ENCODE measurements at regions of chr9 and their contacts with region 1.

Region 1: DNA sequence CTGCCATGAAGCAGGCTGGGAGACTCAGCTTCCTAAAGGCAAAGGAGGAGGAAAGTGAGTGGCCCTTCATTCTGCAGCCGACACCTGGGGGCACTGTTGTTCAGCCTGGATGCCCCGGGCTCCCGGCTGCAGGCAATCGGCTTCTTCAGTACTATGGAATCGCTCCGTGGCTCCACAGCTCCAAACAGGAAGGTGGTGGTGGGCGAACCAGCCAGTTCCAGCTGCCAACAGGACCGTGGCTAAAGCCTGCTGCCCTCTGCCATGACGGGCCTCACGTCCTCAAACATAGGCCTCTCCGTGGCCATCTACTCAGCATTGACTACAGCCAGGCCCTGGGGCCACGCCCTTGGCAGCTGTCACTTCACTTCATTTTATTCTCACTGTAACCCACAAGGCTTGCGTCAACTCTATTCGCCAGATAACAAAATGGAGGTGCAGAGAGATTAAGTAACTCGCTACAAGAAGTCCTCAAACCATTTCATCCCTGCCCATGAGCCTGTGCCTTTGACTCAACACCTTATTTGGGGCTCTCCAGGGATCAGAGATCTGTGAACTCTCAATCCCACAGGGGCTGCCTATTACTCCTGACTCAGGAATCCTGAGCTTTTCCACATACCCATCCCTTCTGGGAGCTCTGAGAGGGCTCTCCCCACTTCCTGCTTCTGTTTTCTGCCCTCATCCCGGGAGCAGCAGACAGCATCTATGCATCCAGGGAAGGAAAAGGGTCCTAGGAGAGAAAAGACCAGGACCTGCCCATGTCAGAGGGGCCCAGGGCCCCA is 38.0 kb downstream of the PAX5 start:
- DNase-seq: peak; percentile 50 to 64 (median 58)
- ATAC-seq: peak; percentile 94
- H3K4me3 ChIP-seq: peak overlapping the region; percentile 27; the same call in 1 of the 2 replicates
- H3K27ac ChIP-seq: no peak overlapping the region; the same call in 2 of the 3 replicates
- H3K4me1 ChIP-seq: peaks cover 5 to 11% of the 10 kb centered on the region in 2 experiments; a peak in 3 of 5 replicates
- H3K27me3 ChIP-seq: peaks cover 4 to 35% of the 10 kb centered on the region in 2 experiments; a peak in 4 of 5 replicates
- CTCF ChIP-seq: peak; percentile 79 to 86 (median 80)
- EP300 ChIP-seq: no peak
- POLR2A ChIP-seq: no peak
- RAD21 ChIP-seq: peak; percentile 72 to 91

Region 2: DNA sequence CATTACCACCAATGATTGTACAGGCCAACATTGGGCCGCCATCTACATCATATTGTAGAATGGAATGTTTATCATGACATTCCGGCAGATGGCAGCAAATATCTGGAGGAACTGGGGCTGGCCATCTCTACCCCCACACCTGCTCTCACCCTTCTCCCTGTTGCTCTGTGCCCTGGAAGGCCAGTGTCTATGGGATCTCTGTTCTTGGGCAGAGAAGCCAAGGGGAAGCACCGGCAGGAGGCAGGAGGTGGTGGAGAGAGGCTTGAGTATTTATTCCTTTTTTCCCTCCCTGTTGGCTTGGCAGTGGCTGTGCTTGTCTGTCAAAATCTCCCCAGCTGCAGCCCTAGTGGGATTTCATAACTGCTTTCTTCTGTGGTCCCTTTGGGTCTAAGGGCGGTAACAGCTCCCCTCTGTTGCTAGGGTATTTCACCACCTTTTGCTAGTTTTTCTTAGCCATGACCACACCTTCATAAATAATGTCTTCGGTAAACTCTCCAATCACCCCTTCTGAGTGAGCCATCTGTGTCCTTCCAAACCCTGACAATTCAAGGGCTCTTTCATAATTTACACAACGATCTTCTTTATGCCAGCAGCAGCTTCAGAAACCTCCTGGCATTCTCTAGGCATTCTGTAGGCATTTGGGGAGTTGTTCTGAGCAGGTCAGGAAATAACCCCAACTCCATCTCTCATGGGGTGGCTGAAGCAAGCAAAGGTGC is 197.6 kb before region 1 on chr9:
- CTCF ChIA-PET with region 1: no interaction called
- POLR2A ChIA-PET with region 1: no interaction called
- in situ Hi-C with region 1: no loop called
- intact Hi-C with region 1: loop called (anchors 1 kb)
- DNase-seq: peak; percentile 13 to 33 (median 18)
- ATAC-seq: peak; percentile 73
- H3K4me3 ChIP-seq: no peak overlapping the region
- H3K27ac ChIP-seq: no peak overlapping the region
- H3K4me1 ChIP-seq: no peaks in the 10 kb centered on the region
- H3K27me3 ChIP-seq: peaks cover 5 to 23% of the 10 kb centered on the region in 2 experiments; a peak in 2 of 5 replicates
- CTCF ChIP-seq: peak; percentile 36 to 55 (median 37); a peak in 4 of 6 replicates
- EP300 ChIP-seq: no peak
- POLR2A ChIP-seq: no peak
- RAD21 ChIP-seq: peak in 1 of 2 experiments; percentile 62; a peak in 2 of 4 replicates

Region 3: GRCh38 chr9:36873247-36873875 is 122.8 kb before region 1 on chr9:
- CTCF ChIA-PET with region 1: interaction called, 7 read pairs
- POLR2A ChIA-PET with region 1: no interaction called
- in situ Hi-C with region 1: no loop called
- intact Hi-C with region 1: loop called (anchors 1 kb)
- DNase-seq: peak; percentile 55 to 72 (median 64)
- ATAC-seq: peak; percentile 92
- H3K4me3 ChIP-seq: no peak overlapping the region
- H3K27ac ChIP-seq: no peak overlapping the region
- H3K4me1 ChIP-seq: no peaks in the 10 kb centered on the region
- H3K27me3 ChIP-seq: peaks cover 0 to 45% of the 10 kb centered on the region in 2 experiments; a peak in 2 of 5 replicates
- CTCF ChIP-seq: peak; percentile 69 to 80 (median 74)
- EP300 ChIP-seq: no peak
- POLR2A ChIP-seq: no peak
- RAD21 ChIP-seq: peak; percentile 46 to 84

Region 4: GRCh38 chr9:36980148-36980974 is 15.8 kb before region 1 on chr9:
- CTCF ChIA-PET with region 1: no interaction called
- POLR2A ChIA-PET with region 1: no interaction called
- in situ Hi-C with region 1: no loop called
- intact Hi-C with region 1: no loop called
- DNase-seq: peak; percentile 24 to 35 (median 27)
- ATAC-seq: peak; percentile 80
- H3K4me3 ChIP-seq: no peak overlapping the region
- H3K27ac ChIP-seq: no peak overlapping the region
- H3K4me1 ChIP-seq: no peaks in the 10 kb centered on the region
- H3K27me3 ChIP-seq: peaks cover 6 to 18% of the 10 kb centered on the region in 2 experiments; a peak in 3 of 5 replicates
- CTCF ChIP-seq: peak; percentile 34 to 43 (median 39); a peak in 5 of 6 replicates
- EP300 ChIP-seq: no peak
- POLR2A ChIP-seq: no peak
- RAD21 ChIP-seq: peak in 1 of 2 experiments; percentile 42; a peak in 2 of 4 replicates

Region 5: DNA sequence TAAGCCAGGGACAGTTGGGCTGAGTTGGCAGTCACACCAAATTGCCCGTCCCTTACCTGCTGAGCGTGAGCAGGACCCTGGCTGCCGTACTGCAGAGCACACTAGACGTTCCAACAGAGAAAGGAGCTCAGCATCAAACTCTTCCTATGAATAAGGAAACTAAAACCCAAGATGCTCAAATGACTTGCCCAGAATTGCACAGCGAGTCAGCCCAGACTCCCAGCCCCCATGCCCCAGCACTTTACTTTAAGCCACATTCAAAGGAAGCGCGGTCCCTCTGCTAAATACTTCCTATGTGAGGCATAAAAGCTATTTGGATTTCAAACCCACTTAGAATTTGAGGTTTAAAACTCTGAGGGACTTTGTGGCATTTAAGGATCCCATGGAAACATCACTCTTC is 14.1 kb after region 1 on chr9:
- CTCF ChIA-PET with region 1: no interaction called
- POLR2A ChIA-PET with region 1: no interaction called
- in situ Hi-C with region 1: no loop called
- intact Hi-C with region 1: no loop called
- DNase-seq: no peak
- ATAC-seq: no peak
- H3K4me3 ChIP-seq: no peak overlapping the region
- H3K27ac ChIP-seq: no peak overlapping the region
- H3K4me1 ChIP-seq: no peaks in the 10 kb centered on the region
- H3K27me3 ChIP-seq: peaks cover 15 to 42% of the 10 kb centered on the region in 2 experiments; a peak in 4 of 5 replicates
- CTCF ChIP-seq: no peak
- EP300 ChIP-seq: no peak
- POLR2A ChIP-seq: no peak
- RAD21 ChIP-seq: no peak

Region 6: DNA sequence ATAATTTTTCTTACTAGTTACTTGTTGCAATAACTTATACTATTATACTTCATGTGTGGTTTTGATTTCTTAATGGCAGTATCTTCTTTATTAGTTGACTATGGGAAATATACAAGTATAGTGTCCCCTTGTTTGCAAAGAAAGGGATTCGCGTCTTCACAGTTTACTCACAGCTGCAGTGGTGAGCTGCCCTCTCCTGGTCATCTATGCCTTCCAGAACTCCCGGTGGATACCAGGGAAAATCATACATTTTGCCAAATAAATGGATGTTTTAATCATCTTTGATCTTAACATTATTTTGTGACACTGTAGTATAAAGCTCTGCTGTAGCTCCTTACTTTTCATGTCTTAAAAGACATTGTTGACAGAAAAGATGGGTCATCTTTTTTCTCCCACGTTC is 266.3 kb after region 1 on chr9:
- CTCF ChIA-PET with region 1: interaction called, 18 read pairs
- POLR2A ChIA-PET with region 1: no interaction called
- in situ Hi-C with region 1: no loop called
- intact Hi-C with region 1: loop called (anchors 5 kb)
- DNase-seq: no peak
- ATAC-seq: peak; percentile 71
- H3K4me3 ChIP-seq: no peak overlapping the region
- H3K27ac ChIP-seq: no peak overlapping the region
- H3K4me1 ChIP-seq: peaks cover 3 to 9% of the 10 kb centered on the region in 2 experiments; a peak in 3 of 5 replicates
- H3K27me3 ChIP-seq: no peaks in the 10 kb centered on the region
- CTCF ChIP-seq: peak; percentile 56 to 75 (median 62)
- EP300 ChIP-seq: no peak
- POLR2A ChIP-seq: no peak
- RAD21 ChIP-seq: peak; percentile 71 to 87

Region 7: GRCh38 chr9:37390759-37391158 is 394.6 kb after region 1 on chr9:
- CTCF ChIA-PET with region 1: no interaction called
- POLR2A ChIA-PET with region 1: no interaction called
- in situ Hi-C with region 1: no loop called
- intact Hi-C with region 1: loop called (anchors 5 kb)
- DNase-seq: peak; percentile 59 to 80 (median 66)
- ATAC-seq: peak; percentile 79
- H3K4me3 ChIP-seq: no peak overlapping the region
- H3K27ac ChIP-seq: no peak overlapping the region
- H3K4me1 ChIP-seq: peaks cover 7 to 8% of the 10 kb centered on the region in 2 experiments; a peak in 2 of 5 replicates
- H3K27me3 ChIP-seq: 0 out of 5 replicates have a peak, but pooled peaks cover 0 to 4% of the 10 kb centered on the region in 2 experiments
- CTCF ChIP-seq: peak; percentile 82 to 84 (median 83)
- EP300 ChIP-seq: no peak
- POLR2A ChIP-seq: no peak
- RAD21 ChIP-seq: peak; percentile 40 to 76; a peak in 3 of 4 replicates

Region 8: GRCh38 chr9:37410969-37411785 is 415.1 kb after region 1 on chr9:
- CTCF ChIA-PET with region 1: no interaction called
- POLR2A ChIA-PET with region 1: no interaction called
- in situ Hi-C with region 1: no loop called
- intact Hi-C with region 1: loop called (anchors 5 kb)
- DNase-seq: peak; percentile 68 to 72 (median 72)
- ATAC-seq: peak; percentile 87
- H3K4me3 ChIP-seq: no peak overlapping the region
- H3K27ac ChIP-seq: no peak overlapping the region
- H3K4me1 ChIP-seq: peaks cover 8 to 26% of the 10 kb centered on the region in 2 experiments; a peak in 4 of 5 replicates
- H3K27me3 ChIP-seq: no peaks in the 10 kb centered on the region; a peak in 1 of 5 replicates
- CTCF ChIP-seq: peak; percentile 61 to 79 (median 70)
- EP300 ChIP-seq: no peak
- POLR2A ChIP-seq: no peak
- RAD21 ChIP-seq: peak in 1 of 2 experiments; percentile 32; a peak in 1 of 4 replicates